ENCODE measurements at regions of chr10 and their contacts with region 1.

Region 1: DNA sequence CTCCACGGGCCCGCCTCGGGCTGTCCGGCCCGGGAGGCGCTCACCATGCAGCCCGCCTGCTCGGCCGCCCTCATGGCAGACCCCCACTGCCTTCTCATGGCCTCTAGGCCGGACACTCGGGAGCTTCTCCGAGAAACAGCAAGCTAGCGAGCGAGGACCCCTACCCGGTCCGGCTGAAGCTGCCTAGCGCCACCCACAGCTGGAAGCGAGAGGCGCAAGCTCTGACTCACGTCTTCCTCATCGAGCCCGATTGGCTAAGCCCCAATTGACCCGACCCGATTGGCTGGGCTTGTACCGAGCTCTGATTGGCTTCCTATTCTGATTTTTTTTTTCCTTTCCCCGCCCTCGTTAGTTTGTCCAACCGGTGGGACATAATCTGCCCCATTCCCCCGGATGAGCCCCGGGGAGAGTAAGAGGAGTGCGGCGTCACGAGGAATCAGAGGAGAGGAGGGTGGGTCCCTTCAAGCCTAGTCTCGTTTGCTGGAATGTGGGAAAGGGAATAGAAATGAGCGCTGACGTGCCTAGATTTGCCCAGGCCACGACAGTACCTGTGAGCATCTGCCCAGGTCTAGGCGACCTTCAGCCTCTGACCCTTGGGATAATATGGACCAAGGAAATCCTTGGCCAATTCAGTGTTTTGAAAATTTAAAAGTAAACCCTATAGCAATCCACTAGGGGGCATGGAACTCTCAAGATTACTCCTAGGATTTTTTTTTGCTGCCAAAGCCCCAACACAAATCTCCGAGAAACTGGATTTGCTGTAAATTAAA is at the start of gene TYSND1:
- DNase-seq: peak; percentile 91
- ATAC-seq: peak; percentile 92
- H3K4me3 ChIP-seq: peak within 1 kb of the TSS; percentile 88
- H3K27ac ChIP-seq: peak within 1 kb of the TSS; percentile 85
- H3K4me1 ChIP-seq: peaks cover 3% of the 10 kb centered on the region; the same call in 1 of the 2 replicates
- H3K27me3 ChIP-seq: no peaks in the 10 kb centered on the region
- CTCF ChIP-seq: peak; percentile 89 to 95 (median 92)
- EP300 ChIP-seq: no peak
- POLR2A ChIP-seq: peak; percentile 90
- RAD21 ChIP-seq: peak; percentile 67
- polyA plus RNA-seq, gene TYSND1: 1.9 to 4.5 TPM

Region 2: GRCh38 chr10:69869291-69869961 is 277.2 kb before region 1 on chr10:
- CTCF ChIA-PET with region 1: no interaction called
- POLR2A ChIA-PET with region 1: no interaction called
- RAD21 ChIA-PET with region 1: no interaction called
- SMC1A ChIA-PET with region 1: no interaction called
- in situ Hi-C with region 1: no loop called
- intact Hi-C with region 1: no loop called
- DNase-seq: no peak
- ATAC-seq: no peak
- H3K4me3 ChIP-seq: no peak overlapping the region
- H3K27ac ChIP-seq: no peak overlapping the region
- H3K4me1 ChIP-seq: no peaks in the 10 kb centered on the region
- H3K27me3 ChIP-seq: peaks cover 3% of the 10 kb centered on the region in 2 experiments; a peak in 3 of 4 replicates
- CTCF ChIP-seq: no peak
- EP300 ChIP-seq: no peak
- POLR2A ChIP-seq: no peak
- RAD21 ChIP-seq: no peak

Region 3: GRCh38 chr10:70032667-70033289 is 113.9 kb before region 1 on chr10:
- CTCF ChIA-PET with region 1: no interaction called
- POLR2A ChIA-PET with region 1: no interaction called
- RAD21 ChIA-PET with region 1: no interaction called
- SMC1A ChIA-PET with region 1: no interaction called
- in situ Hi-C with region 1: no loop called
- intact Hi-C with region 1: no loop called
- DNase-seq: no peak
- ATAC-seq: no peak
- H3K4me3 ChIP-seq: no peak overlapping the region
- H3K27ac ChIP-seq: no peak overlapping the region
- H3K4me1 ChIP-seq: no peaks in the 10 kb centered on the region
- H3K27me3 ChIP-seq: 0 out of 4 replicates have a peak, but pooled peaks cover 0 to 3% of the 10 kb centered on the region in 2 experiments
- CTCF ChIP-seq: no peak
- EP300 ChIP-seq: no peak
- POLR2A ChIP-seq: no peak
- RAD21 ChIP-seq: no peak

Region 4: DNA sequence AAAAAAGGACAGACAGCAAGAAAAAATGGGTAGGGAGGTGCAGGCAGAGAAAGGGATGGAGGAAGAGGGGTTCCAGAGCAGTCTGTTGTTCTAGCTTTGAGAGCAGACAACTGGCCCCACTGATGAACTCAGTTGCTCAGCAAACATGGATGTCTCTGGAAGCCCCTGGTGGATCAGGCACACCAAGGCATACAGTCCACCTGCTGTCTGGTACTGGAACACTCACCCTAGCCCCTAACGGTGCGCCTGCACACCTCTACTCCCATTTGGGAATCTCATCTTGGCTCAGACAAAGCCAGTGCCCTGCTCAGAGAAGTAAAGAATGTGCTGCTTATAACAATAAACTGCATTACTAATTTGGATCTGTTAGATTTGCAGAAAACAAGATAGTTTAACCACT is 86.3 kb before region 1 on chr10:
- CTCF ChIA-PET with region 1: no interaction called
- POLR2A ChIA-PET with region 1: no interaction called
- RAD21 ChIA-PET with region 1: no interaction called
- SMC1A ChIA-PET with region 1: no interaction called
- in situ Hi-C with region 1: no loop called
- intact Hi-C with region 1: no loop called
- DNase-seq: no peak
- ATAC-seq: no peak
- H3K4me3 ChIP-seq: no peak overlapping the region
- H3K27ac ChIP-seq: no peak overlapping the region
- H3K4me1 ChIP-seq: no peaks in the 10 kb centered on the region
- H3K27me3 ChIP-seq: peaks cover 0 to 2% of the 10 kb centered on the region in 2 experiments; a peak in 2 of 4 replicates
- CTCF ChIP-seq: no peak
- EP300 ChIP-seq: no peak
- POLR2A ChIP-seq: no peak
- RAD21 ChIP-seq: no peak

Region 5: GRCh38 chr10:70084189-70084588 is 62.5 kb before region 1 on chr10:
- CTCF ChIA-PET with region 1: interaction called, 15 read pairs
- POLR2A ChIA-PET with region 1: no interaction called
- RAD21 ChIA-PET with region 1: interaction called, 5 read pairs
- SMC1A ChIA-PET with region 1: interaction called, 7 read pairs
- in situ Hi-C with region 1: no loop called
- intact Hi-C with region 1: loop called (anchors 1 kb)
- DNase-seq: no peak
- ATAC-seq: peak; percentile 44; the same call in 1 of the 3 replicates
- H3K4me3 ChIP-seq: no peak overlapping the region
- H3K27ac ChIP-seq: no peak overlapping the region
- H3K4me1 ChIP-seq: no peaks in the 10 kb centered on the region
- H3K27me3 ChIP-seq: no peaks in the 10 kb centered on the region
- CTCF ChIP-seq: peak in 1 of 3 experiments; percentile 33; a peak in 1 of 6 replicates
- EP300 ChIP-seq: no peak
- POLR2A ChIP-seq: no peak
- RAD21 ChIP-seq: no peak

Region 6: GRCh38 chr10:70115948-70116682 is 30.6 kb before region 1 on chr10:
- CTCF ChIA-PET with region 1: interaction called, 173 read pairs
- POLR2A ChIA-PET with region 1: interaction called, 9 read pairs
- RAD21 ChIA-PET with region 1: interaction called, 46 read pairs
- SMC1A ChIA-PET with region 1: interaction called, 42 read pairs
- in situ Hi-C with region 1: no loop called
- intact Hi-C with region 1: loop called (anchors 2 kb)
- DNase-seq: no peak
- ATAC-seq: peak; percentile 97
- H3K4me3 ChIP-seq: no peak overlapping the region
- H3K27ac ChIP-seq: no peak overlapping the region
- H3K4me1 ChIP-seq: no peaks in the 10 kb centered on the region
- H3K27me3 ChIP-seq: no peaks in the 10 kb centered on the region
- CTCF ChIP-seq: peak; percentile 73 to 93 (median 85)
- EP300 ChIP-seq: no peak
- POLR2A ChIP-seq: no peak
- RAD21 ChIP-seq: peak; percentile 50

Region 7: GRCh38 chr10:70169649-70170364 is 23.1 kb after region 1 on chr10:
- CTCF ChIA-PET with region 1: interaction called, 56 read pairs
- POLR2A ChIA-PET with region 1: interaction called, 45 read pairs
- RAD21 ChIA-PET with region 1: interaction called, 28 read pairs
- SMC1A ChIA-PET with region 1: interaction called, 23 read pairs
- in situ Hi-C with region 1: no loop called
- intact Hi-C with region 1: no loop called
- DNase-seq: no peak
- ATAC-seq: peak; percentile 35
- H3K4me3 ChIP-seq: peak overlapping the region; percentile 91
- H3K27ac ChIP-seq: peak overlapping the region; percentile 56
- H3K4me1 ChIP-seq: peaks cover 11% of the 10 kb centered on the region
- H3K27me3 ChIP-seq: no peaks in the 10 kb centered on the region
- CTCF ChIP-seq: no peak
- EP300 ChIP-seq: no peak
- POLR2A ChIP-seq: no peak
- RAD21 ChIP-seq: no peak

Region 8: DNA sequence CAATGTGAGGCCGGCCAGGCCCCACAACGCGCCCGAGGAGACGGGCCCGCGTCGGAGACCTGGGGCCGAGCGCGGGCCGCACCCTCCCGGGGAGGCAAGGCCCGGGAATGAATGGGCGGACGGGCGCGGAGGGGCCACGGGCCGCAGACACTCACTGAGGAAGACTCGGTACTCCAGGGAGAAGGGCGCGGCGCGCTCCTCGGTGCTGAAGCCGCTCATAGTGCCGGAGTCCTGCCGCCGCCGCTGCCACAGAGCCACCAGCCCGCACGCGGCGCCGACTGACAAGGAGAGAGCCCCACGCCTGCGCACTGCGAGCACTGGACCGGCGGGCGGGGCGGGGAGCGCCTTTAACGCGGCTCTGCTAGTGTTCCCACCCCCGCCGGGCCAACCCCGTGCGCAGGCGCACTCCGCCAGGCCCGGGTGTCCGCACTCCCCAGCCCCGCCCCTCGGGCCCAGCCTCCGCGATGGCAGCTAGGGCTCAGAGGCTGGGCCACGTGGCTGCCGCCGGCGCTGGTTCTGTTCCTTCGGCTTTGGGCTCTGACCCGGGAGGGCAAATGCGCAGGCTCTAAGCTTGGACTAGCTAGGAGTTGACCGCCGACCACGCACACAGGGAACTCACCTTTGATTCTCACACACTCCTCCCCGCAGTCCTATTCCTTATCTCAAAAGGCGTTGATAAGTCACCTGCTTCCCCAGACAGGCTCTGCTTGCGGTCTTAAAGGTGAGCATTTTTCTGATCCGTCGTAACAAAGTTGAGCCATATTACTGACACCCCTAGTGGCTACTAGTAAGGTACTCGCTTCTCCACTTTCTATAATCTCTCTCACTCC is 86.7 kb after region 1 on chr10 and contains the start of gene PPA1:
- CTCF ChIA-PET with region 1: interaction called, 10 read pairs
- POLR2A ChIA-PET with region 1: interaction called, 13 read pairs
- RAD21 ChIA-PET with region 1: interaction called, 11 read pairs
- SMC1A ChIA-PET with region 1: interaction called, 6 read pairs
- in situ Hi-C with region 1: no loop called
- intact Hi-C with region 1: no loop called
- DNase-seq: peak; percentile 80
- ATAC-seq: peak; percentile 92
- H3K4me3 ChIP-seq: peak within 1 kb of the TSS; percentile 93
- H3K27ac ChIP-seq: peak within 1 kb of the TSS; percentile 76
- H3K4me1 ChIP-seq: no peaks in the 10 kb centered on the region
- H3K27me3 ChIP-seq: no peaks in the 10 kb centered on the region
- CTCF ChIP-seq: peak in 2 of 3 experiments; percentile 20 to 31; a peak in 3 of 6 replicates
- EP300 ChIP-seq: no peak
- POLR2A ChIP-seq: peak; percentile 95
- RAD21 ChIP-seq: no peak
- polyA plus RNA-seq, gene PPA1: 224 to 386 TPM

Region 9: GRCh38 chr10:70363971-70364771 is 217.5 kb after region 1 on chr10:
- CTCF ChIA-PET with region 1: interaction called, 42 read pairs
- POLR2A ChIA-PET with region 1: no interaction called
- RAD21 ChIA-PET with region 1: interaction called, 33 read pairs
- SMC1A ChIA-PET with region 1: interaction called, 17 read pairs
- in situ Hi-C with region 1: no loop called
- intact Hi-C with region 1: no loop called
- DNase-seq: peak; percentile 65
- ATAC-seq: peak; percentile 96
- H3K4me3 ChIP-seq: no peak overlapping the region
- H3K27ac ChIP-seq: peak overlapping the region; percentile 69
- H3K4me1 ChIP-seq: peaks cover 18% of the 10 kb centered on the region
- H3K27me3 ChIP-seq: no peaks in the 10 kb centered on the region
- CTCF ChIP-seq: peak; percentile 84 to 96 (median 86); a peak in 5 of 6 replicates
- EP300 ChIP-seq: no peak
- POLR2A ChIP-seq: no peak
- RAD21 ChIP-seq: peak; percentile 100